AG04450 (cell line): ENCODE measurements at regions of chr11 and their contacts with region 1.

Region 1: GRCh38 chr11:18540207-18541009 is 13.7 kb upstream of the TSG101 start:
- DNase-seq: no peak
- H3K4me3 ChIP-seq: no peak overlapping the region
- H3K27ac ChIP-seq: no peak overlapping the region
- H3K27me3 ChIP-seq: no peaks in the 10 kb centered on the region
- CTCF ChIP-seq: peak; percentile 50

Region 2: DNA sequence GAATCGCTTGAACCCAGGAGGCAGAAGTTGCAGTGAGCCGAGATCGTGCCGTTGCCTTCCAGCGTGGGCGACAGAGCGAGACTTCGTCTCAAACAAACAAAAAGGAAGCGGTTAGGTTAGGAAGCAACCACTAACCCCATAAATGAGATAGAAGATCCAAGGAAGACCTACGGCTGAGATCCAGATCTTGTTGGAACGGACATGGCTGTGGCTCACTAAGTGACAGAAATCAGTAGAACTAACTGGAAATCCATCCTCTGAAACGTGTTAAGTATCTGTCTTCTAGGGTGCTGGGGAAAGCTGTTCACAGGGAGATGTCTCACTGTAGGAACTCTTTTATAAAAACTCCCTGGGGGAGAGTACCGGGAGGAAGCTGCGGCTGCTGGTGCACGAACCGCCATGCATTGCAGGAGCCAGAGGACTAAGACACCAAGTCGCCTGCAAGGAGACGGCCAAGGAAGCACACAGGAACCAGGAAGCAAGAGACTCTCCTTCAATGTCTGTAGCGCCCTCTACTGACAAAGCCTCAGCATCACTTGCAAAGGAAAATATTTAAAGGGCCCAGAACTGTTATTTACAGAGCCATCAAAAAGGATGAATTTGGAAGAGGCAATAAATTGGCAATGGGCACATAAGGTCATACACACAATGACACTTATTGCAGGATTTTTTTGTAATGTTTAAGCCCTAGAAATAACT is 110.6 kb after region 1 on chr11:
- CTCF ChIA-PET with region 1: interaction called, 27 read pairs
- POLR2A ChIA-PET with region 1: no interaction called
- DNase-seq: peak; percentile 42
- H3K4me3 ChIP-seq: no peak overlapping the region
- H3K27ac ChIP-seq: no peak overlapping the region
- H3K27me3 ChIP-seq: peaks cover 3% of the 10 kb centered on the region
- CTCF ChIP-seq: peak; percentile 76

Region 3: DNA sequence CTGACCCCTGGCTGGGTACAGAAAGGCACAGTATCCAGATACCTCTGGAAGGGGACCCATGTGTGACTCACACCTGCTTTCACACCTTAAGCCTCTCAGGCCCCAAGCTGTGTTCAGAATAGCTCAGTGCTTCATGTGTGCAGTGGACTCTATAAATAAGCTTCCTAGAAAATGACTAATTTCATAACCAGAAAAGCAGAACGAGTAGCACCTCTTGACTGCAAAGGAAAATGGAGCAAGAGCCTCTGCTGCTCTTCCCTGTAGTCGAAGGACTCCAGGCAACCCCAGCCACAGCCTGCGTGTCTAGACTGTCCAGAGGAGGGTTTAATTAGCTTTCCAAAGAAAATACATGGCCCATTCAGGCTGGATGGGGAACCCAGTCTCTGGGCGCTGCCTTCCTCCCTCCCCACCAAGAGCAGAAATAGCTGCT is 228.1 kb after region 1 on chr11:
- CTCF ChIA-PET with region 1: interaction called, 10 read pairs
- POLR2A ChIA-PET with region 1: no interaction called
- DNase-seq: no peak
- H3K4me3 ChIP-seq: no peak overlapping the region
- H3K27ac ChIP-seq: no peak overlapping the region
- H3K27me3 ChIP-seq: peaks cover 11% of the 10 kb centered on the region
- CTCF ChIP-seq: no peak

Region 4: DNA sequence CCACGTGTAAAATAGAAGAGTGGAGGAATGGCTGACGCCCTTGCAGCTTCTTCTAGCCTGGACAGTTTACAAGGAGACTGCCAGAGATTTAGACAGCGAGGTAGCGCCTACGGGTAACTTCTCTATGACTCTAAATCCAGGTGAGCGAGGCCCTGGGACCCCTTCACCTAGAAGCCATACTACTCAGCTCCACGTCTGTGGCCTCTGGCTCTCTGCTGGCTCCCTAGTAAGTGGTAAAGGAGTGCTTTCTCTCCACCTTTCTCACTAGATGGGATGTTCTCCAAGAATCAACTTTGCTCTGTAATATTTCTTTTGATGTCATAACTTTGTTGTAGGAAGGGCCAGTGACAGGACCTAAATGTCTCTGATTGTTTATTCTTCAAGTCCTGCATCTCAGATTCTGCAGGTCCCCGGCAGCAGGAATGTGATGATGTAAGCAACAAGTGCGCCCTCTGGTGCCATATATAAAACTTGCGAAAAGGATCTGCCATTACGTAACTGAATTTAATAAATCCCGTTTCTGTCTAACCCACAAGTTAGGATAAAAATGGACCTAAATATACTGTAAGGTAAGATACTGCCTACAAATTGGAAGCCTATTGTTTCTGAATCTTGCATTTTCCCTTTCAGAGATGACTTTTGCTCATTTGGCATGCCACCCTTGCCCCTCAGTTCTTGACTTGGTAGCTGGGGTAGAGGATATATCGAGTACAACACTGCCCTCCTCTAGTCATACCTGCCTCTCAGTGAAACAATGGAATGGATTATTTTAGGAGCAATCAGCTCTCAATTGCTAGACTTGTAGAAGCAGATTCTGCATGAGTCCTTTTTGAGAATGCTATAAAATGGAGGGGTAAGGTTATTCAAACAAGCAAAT is 262.2 kb after region 1 on chr11:
- CTCF ChIA-PET with region 1: interaction called, 12 read pairs
- POLR2A ChIA-PET with region 1: no interaction called
- DNase-seq: peak; percentile 21
- H3K4me3 ChIP-seq: no peak overlapping the region
- H3K27ac ChIP-seq: no peak overlapping the region
- H3K27me3 ChIP-seq: peaks cover 6% of the 10 kb centered on the region
- CTCF ChIP-seq: peak; percentile 70